Activated CD8-positive, alpha-beta T cell treated with anti-CD3 and anti-CD28 coated beads, Interleukin-2, amount 10 ng/mL, durations not matched to agents 7 days and 5 days (primary cell): ENCODE measurements at regions of chr15 and their contacts with region 1.

Region 1: DNA sequence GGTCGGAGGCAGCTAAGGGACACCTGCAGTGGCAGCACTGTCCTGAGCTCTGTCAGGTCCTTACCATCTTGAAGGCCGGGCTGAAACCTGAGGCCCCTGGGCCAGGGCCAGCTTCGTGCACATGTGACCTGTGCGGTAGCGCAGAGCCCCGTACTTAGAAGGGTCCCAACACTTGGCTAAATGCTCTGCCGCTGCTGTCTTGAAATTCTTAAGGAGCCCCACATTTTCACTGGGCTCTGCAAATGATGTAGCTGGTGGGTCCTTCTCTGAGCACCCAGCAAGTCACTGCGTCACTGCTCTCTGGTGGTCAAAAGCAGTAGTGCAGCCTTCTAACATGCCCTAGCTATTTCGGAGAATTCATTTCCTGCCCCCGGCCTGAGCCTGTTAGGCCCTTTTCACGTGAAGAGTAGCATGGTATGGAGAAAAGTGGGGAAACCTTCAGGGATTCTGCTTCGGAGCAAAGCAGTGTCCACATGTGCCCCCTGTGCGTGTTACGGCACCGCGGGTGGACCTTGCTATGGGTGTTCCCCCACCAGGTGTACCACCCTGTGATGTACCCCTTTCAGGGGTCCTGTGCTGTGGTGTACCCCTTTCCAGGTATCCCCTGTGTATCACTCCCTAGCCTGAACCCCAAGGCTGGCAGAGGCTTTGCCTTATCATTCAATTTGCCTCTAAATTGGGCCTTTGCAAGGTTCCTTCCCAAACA is 79.7 kb downstream of the TMEM266 start:
- DNase-seq: peak; percentile 89
- ATAC-seq: peak; percentile 92
- H3K4me3 Mint-ChIP-seq: no peak overlapping the region
- H3K27ac Mint-ChIP-seq: no peak overlapping the region
- H3K4me1 Mint-ChIP-seq: peaks cover 13% of the 10 kb centered on the region
- H3K27me3 Mint-ChIP-seq: peaks cover 33% of the 10 kb centered on the region

Region 2: DNA sequence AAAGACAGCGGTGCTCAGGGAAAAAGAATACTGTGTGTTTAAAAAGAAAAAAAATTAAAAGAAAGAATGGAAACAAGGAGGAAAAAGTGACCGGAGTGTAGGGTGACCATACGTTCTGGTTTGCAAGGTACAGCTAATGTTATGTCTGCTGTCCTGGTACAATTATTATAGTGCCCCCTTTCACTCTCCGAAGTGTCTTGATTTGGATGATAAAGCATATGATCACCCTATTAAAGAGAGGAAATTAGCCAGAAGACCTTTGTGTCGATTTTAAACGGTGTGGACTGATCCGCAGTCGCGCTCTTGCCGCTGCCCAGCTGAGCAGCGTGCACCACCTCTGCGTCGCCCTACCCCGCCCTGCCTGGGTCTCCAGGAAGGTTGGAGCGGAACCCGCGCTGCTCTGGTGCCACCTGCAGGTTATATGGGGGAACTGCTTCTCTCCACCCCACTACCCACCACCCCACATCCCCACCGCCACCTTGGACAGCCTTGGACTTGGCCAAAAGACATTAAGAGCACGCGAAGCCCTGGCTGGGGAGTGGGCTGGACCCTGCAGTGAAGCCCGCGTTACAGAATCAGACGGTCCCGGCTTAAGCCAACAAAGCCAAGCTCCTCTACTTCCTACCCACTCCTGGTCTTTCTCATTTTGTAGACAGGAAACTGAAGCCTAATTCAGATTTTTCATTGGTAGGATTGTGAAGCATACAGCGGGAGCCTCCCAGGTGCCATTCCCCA is 337.5 kb before region 1 on chr15:
- CTCF ChIA-PET with region 1: interaction called, 10 read pairs
- POLR2A ChIA-PET with region 1: no interaction called
- DNase-seq: peak; percentile 87
- ATAC-seq: peak; percentile 99
- H3K4me3 Mint-ChIP-seq: no peak overlapping the region
- H3K27ac Mint-ChIP-seq: no peak overlapping the region
- H3K4me1 Mint-ChIP-seq: peaks cover 9% of the 10 kb centered on the region
- H3K27me3 Mint-ChIP-seq: peaks cover 51% of the 10 kb centered on the region

Region 3: DNA sequence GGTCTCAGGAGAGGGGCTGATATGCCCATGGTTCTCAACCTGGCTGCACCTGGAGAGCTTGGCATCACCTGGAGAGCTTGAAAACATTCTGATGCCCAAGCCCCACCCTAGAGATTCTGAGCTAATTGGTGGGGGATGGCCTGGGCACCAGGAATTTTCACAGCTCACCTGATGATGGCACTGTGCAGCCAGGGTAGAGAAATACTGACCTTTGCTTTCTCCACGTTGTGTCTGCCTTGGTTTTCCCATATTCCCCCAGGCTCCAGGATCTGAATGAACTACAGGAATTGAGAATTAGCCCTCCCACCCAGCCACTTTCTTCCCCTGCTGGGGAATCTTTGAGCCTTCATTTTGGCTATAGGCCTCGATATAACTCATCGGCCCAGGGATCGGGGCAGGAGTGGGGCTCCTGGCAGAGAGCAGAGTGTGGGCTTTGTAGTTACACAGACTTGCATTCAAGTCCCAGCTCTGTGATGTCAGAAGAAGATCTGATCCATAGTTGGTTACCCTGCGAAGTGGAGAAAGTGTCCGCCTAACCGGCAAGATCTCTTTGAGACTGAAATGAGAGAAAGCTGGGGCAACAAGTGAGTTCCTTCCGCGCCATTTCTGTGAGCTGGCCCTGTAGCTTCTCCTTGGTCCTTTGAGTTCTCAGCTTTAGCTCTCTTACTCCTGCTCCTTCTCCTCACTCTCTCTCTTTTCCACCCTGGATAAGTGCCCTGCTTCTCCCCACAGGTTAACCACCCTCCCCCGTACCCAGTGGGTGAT is 329.4 kb before region 1 on chr15:
- CTCF ChIA-PET with region 1: interaction called, 26 read pairs
- POLR2A ChIA-PET with region 1: no interaction called
- DNase-seq: peak; percentile 25
- ATAC-seq: peak; percentile 53
- H3K4me3 Mint-ChIP-seq: no peak overlapping the region
- H3K27ac Mint-ChIP-seq: no peak overlapping the region
- H3K4me1 Mint-ChIP-seq: peaks cover 6% of the 10 kb centered on the region
- H3K27me3 Mint-ChIP-seq: peaks cover 17% of the 10 kb centered on the region

Region 4: DNA sequence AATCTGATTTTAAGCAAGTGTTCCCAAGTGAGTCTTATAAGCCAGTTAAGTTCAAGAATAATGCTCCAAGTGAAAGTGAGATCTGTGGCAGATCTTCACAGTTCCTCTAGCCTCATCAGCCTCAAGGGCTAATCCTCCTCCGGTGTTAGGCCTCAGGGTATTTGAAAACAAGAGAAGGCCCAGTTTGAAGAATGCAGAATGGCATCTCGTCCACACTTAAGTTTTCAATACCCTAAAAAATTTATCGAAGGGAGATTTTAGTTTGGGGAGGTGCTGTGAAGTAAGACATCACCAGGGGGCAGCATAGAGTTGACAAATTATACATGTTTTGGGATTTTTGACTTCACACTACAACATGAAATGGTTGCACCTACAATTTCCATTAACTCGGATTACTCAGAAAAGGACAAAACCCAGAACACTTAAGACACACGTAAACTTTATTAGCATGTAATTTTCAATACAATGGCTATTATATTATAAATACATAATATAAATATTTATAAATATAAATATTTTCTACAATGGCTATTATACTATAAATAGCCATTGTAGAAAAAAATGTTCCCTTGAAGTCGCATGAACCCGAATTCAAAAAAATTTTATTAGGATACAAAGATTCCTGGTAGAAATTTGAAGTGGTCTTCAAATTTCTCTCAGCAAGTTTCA is 82.1 kb before region 1 on chr15:
- CTCF ChIA-PET with region 1: interaction called, 256 read pairs
- POLR2A ChIA-PET with region 1: interaction called, 3 read pairs
- DNase-seq: peak; percentile 65
- ATAC-seq: no peak
- H3K4me3 Mint-ChIP-seq: no peak overlapping the region
- H3K27ac Mint-ChIP-seq: no peak overlapping the region
- H3K4me1 Mint-ChIP-seq: peaks cover 20% of the 10 kb centered on the region
- H3K27me3 Mint-ChIP-seq: peaks cover 55% of the 10 kb centered on the region

Region 5: GRCh38 chr15:76065267-76065666 is 74.3 kb before region 1 on chr15:
- CTCF ChIA-PET with region 1: interaction called, 256 read pairs
- POLR2A ChIA-PET with region 1: no interaction called
- DNase-seq: peak; percentile 68
- ATAC-seq: peak; percentile 98
- H3K4me3 Mint-ChIP-seq: no peak overlapping the region
- H3K27ac Mint-ChIP-seq: no peak overlapping the region
- H3K4me1 Mint-ChIP-seq: peaks cover 16% of the 10 kb centered on the region
- H3K27me3 Mint-ChIP-seq: peaks cover 64% of the 10 kb centered on the region

Region 6: GRCh38 chr15:76127880-76128279 is 11.6 kb before region 1 on chr15:
- CTCF ChIA-PET with region 1: interaction called, 14 read pairs
- POLR2A ChIA-PET with region 1: no interaction called
- DNase-seq: no peak
- ATAC-seq: no peak
- H3K4me3 Mint-ChIP-seq: no peak overlapping the region
- H3K27ac Mint-ChIP-seq: no peak overlapping the region
- H3K4me1 Mint-ChIP-seq: no peaks in the 10 kb centered on the region
- H3K27me3 Mint-ChIP-seq: peaks cover 17% of the 10 kb centered on the region

Region 7: GRCh38 chr15:76150971-76151598 is 11.6 kb after region 1 on chr15:
- CTCF ChIA-PET with region 1: interaction called, 79 read pairs
- POLR2A ChIA-PET with region 1: no interaction called
- DNase-seq: peak; percentile 84
- ATAC-seq: peak; percentile 90
- H3K4me3 Mint-ChIP-seq: no peak overlapping the region
- H3K27ac Mint-ChIP-seq: no peak overlapping the region
- H3K4me1 Mint-ChIP-seq: peaks cover 12% of the 10 kb centered on the region
- H3K27me3 Mint-ChIP-seq: peaks cover 11% of the 10 kb centered on the region